Heart right ventricle (tissue), 16 donors: ENCODE measurements at regions of chr10 and their contacts with region 1.

Region 1: DNA sequence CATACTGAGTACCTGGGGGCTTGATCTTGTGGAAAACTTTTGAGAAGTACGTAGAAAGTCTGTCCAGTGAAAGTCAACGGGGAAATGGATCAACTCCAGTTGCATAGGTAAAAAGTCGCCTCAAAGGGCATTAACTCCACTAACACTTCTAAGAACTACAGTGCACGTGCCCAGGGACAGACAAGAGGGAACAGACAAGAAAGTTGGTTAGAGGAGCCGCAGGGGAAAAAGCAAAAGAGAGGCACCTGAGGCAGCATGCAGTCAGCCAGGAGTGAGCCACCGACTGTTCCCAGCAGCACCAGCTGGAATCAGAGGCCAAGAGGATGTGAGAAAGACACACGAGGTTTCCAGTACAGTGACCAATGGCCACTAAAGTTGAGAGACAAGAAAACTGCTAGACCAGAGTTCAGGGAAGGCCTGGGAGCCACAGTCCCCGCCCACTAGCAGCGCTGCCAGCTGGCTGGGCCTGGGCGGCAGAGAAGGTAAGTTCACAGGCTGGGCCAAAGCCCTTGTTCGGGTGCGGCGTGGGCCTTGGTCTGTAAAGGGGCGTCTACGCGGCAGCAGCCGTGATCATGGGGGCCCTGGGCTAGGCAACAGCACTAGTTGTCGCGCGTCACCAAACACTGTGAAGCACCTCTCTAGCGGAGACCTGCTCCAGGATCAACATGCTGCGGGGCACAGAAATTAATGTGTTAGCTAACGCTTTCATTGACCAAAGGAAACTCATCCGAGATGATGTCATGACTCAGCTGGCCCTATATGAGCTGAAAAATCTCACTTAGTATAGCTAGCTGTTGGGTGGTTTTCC is 14.0 kb downstream of the ITGB1 start:
- DNase-seq: peak in 1 of 2 donors; percentile 21
- ATAC-seq: peak; percentile 24 to 71 (median 40)
- H3K4me3 ChIP-seq: no peak overlapping the region
- H3K27ac ChIP-seq: peak overlapping the region in 8 of 10 donors; percentile 3 to 86 (median 41)
- H3K4me1 ChIP-seq: peaks cover 24 to 96% (median 83%) of the 10 kb centered on the region in 9 donors
- H3K27me3 ChIP-seq: no peaks in the 10 kb centered on the region
- CTCF ChIP-seq: no peak

Region 2: DNA sequence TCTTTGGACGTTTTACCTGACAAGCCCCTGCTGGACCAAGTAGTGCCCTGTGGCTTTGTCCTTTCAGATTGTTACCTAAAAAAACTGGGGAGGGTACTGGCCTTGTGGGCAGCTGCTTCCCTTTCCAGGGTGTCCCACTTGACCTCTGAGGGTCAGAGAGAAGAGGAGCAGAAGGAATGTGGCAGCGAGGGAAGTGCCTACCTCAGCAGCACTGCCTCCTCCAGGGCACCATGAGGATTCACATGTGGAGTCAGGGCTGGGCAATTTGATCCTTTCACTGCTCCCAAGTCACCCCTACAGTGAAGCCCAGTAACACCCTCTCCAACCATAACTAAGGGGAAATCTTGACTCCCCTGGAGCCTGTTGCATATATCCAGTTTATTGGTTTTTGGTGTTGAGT is 50.6 kb before region 1 on chr10:
- intact Hi-C with region 1: loop called in 1 of 10 experiments (anchors 5 kb)
- DNase-seq: no peak
- ATAC-seq: peak in 1 of 8 donors; percentile 48
- H3K4me3 ChIP-seq: no peak overlapping the region
- H3K27ac ChIP-seq: no peak overlapping the region
- H3K4me1 ChIP-seq: peaks cover 0 to 5% (median 0%) of the 10 kb centered on the region in 9 donors
- H3K27me3 ChIP-seq: no peaks in the 10 kb centered on the region
- CTCF ChIP-seq: no peak